ENCODE measurements at regions of chr13 and their contacts with region 1.

Region 1: GRCh38 chr13:51286135-51287002 is 53.1 kb upstream of the SERPINE3 start:
- DNase-seq: peak; percentile 64 to 81 (median 74)
- H3K4me3 ChIP-seq: no peak overlapping the region
- H3K27ac ChIP-seq: no peak overlapping the region
- H3K4me1 ChIP-seq: peaks cover 0 to 1% (median 0%) of the 10 kb centered on the region in 4 experiments
- H3K27me3 ChIP-seq: no peaks in the 10 kb centered on the region

Region 2: DNA sequence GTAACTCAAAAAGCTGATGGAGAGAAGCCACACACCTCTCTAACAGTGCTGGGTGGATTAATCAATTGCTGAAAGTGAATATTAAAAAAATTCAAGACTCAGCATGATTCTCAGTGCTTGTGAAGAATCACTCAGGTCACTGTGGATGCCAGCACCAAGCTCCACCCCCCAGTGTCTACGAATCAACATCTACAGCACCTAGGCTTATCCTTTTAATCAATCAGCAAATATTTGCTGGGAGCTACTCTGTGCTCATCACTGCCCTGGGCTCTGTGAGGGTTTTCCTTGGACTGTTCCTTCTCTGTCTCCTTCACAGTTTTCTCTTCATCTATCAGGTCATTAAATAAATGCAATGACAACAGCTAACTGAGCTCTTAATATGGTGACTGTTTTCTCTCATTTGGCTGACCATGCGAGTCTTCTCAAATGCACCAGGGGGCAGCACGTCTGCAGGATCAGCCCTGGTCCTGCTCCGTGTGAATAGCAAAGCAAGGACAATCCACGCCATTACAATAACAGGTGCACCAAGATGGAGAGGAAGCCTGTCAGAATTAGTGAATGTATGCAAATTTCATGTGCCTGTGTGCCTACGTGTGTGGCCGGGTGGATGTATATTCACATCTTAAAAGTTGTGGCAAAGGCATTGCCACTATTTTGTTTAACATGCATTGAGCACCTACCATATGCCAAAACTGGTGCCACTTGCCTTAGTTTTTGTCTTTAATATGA is 160.7 kb before region 1 on chr13:
- CTCF ChIA-PET with region 1: interaction called, 114 read pairs
- POLR2A ChIA-PET with region 1: no interaction called
- DNase-seq: peak; percentile 67 to 83 (median 82)
- H3K4me3 ChIP-seq: no peak overlapping the region
- H3K27ac ChIP-seq: no peak overlapping the region
- H3K4me1 ChIP-seq: no peaks in the 10 kb centered on the region
- H3K27me3 ChIP-seq: no peaks in the 10 kb centered on the region

Region 3: DNA sequence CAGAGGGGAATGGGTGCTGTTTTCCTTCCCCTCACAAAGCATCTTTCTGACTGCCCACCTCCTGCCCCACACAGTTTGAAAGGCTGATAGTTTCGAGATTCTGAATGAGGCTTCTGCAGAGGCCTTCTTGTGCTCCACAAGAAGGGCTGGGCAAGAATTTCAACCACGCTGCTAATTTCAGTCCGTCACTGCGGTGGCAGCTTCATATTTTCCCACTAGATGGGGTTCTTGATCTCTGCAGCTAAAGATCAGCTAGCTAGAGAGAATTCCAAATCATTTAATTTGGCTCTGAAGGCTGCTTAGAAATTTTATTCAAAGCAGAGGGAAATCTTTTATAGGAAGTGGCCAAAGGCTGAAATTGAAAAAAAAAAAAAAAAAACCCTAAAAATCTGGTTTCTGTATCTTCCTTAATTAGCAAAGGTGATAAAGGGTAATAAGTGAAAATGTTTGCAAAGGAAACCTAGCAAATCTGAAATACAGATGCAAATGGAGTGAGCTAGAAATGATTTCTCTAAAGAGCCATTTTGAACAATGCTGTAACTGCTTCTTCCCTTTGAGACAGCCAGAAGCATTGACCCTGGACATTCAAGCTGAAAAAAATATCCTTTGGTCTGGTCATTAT is 137.3 kb before region 1 on chr13:
- CTCF ChIA-PET with region 1: interaction called, 60 read pairs
- POLR2A ChIA-PET with region 1: no interaction called
- DNase-seq: peak; percentile 29 to 59 (median 57)
- H3K4me3 ChIP-seq: no peak overlapping the region
- H3K27ac ChIP-seq: no peak overlapping the region
- H3K4me1 ChIP-seq: no peaks in the 10 kb centered on the region
- H3K27me3 ChIP-seq: no peaks in the 10 kb centered on the region

Region 4: GRCh38 chr13:51262501-51263211 is 23.7 kb before region 1 on chr13:
- CTCF ChIA-PET with region 1: interaction called, 14 read pairs
- POLR2A ChIA-PET with region 1: no interaction called
- DNase-seq: no peak
- H3K4me3 ChIP-seq: no peak overlapping the region
- H3K27ac ChIP-seq: no peak overlapping the region
- H3K4me1 ChIP-seq: no peaks in the 10 kb centered on the region
- H3K27me3 ChIP-seq: no peaks in the 10 kb centered on the region

Region 5: GRCh38 chr13:51303063-51303552 is 16.7 kb after region 1 on chr13:
- CTCF ChIA-PET with region 1: interaction called, 35 read pairs
- POLR2A ChIA-PET with region 1: no interaction called
- DNase-seq: no peak
- H3K4me3 ChIP-seq: no peak overlapping the region
- H3K27ac ChIP-seq: no peak overlapping the region
- H3K4me1 ChIP-seq: peaks cover 0 to under 1% (median 0%) of the 10 kb centered on the region in 4 experiments
- H3K27me3 ChIP-seq: no peaks in the 10 kb centered on the region